ENCODE measurements at regions of chr13 and their contacts with region 1.

Region 1: GRCh38 chr13:26707122-26708006 is 53.2 kb downstream of the GPR12 start:
- DNase-seq: peak; percentile 41 to 68 (median 57)
- H3K4me3 ChIP-seq: no peak overlapping the region
- H3K27ac ChIP-seq: no peak overlapping the region
- H3K4me1 ChIP-seq: no peaks in the 10 kb centered on the region
- H3K27me3 ChIP-seq: no peaks in the 10 kb centered on the region
- CTCF ChIP-seq: peak; percentile 36 to 70 (median 64)
- POLR2A ChIP-seq: no peak

Region 2: DNA sequence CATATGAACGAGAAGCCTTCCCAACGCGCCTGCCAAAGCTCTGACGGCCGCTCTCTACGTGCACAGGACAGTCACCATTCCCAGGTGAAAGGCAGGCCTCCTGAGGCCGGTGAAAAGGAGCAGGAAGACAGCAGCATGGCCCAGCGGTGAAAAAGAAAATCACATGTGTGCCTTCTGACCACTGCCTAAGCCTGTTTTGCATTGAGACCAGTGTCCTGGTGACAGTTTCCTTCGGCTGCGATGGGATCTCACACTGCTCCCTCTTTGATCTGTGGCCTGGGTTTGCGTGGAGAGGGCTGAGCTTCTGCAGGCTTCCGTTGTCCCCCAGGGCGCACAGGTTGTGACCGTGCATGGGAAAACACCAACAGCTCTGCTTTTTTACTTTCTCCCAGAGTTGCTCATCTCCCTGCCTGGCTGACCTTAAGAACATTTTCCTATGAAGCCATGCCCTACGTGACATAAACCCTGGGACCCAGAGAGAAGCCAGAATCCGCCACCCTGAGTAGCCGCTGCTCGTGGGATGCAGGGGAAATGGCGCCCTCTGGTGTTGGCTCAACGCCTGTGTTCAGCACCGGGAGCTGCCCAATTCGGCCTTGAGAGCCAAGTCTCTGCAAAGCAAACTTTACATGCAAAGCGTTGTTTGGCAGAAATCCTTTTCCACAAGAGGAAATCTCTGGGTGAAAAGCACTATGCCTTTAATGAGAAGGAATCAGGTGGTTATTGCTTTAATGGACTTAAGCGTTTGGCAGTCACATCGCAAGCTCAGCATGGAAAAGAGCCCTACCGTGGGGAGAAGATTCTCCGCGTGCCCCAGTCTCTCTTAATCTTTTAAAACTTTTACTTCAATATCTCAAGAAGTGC is 165.4 kb after region 1 on chr13:
- intact Hi-C with region 1: loop called in 1 of 2 experiments (anchors 5 kb)
- DNase-seq: peak; percentile 55 to 82 (median 71)
- H3K4me3 ChIP-seq: no peak overlapping the region
- H3K27ac ChIP-seq: no peak overlapping the region
- H3K4me1 ChIP-seq: no peaks in the 10 kb centered on the region
- H3K27me3 ChIP-seq: no peaks in the 10 kb centered on the region
- CTCF ChIP-seq: peak; percentile 46 to 72 (median 64)
- POLR2A ChIP-seq: no peak

Region 3: DNA sequence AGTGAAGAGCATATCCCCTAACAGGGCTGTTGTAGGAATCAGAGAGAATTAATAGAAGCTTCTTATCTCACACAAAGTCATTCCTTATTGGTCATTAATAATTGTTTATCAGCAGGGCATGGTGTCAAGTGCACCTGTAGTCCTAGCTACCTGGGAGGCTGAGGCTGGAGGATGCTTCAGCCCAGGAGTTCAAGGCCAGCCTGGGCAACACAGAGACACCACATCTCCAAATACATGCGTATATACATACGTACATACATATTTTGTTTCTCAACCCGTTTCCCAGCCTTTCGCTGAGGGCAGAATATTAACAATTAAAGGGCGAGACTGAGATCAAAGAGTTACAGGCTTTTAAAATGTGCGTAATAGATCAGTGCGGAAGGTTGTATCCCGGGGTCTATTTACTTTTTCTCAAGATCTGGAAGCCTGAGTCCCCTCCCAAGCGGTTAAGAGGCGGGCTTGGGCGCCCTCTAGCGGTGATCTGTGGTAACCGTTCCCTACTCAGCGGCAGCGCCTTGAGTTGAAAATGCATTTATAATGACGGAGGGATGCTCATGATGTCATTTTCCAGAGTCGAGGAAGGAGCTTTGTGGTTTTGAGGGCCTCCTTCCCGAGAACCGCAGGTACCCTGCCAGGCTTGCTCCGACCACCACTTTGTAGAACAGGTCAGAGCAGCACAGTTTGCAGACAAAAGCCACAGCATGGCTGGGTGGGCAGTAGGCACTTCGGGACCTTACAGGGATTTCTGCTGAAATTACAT is 222.8 kb after region 1 on chr13:
- intact Hi-C with region 1: loop called (anchors 5 kb)
- DNase-seq: peak; percentile 47 to 79 (median 67)
- H3K4me3 ChIP-seq: no peak overlapping the region
- H3K27ac ChIP-seq: no peak overlapping the region
- H3K4me1 ChIP-seq: peaks cover 0 to 7% of the 10 kb centered on the region in 2 donors
- H3K27me3 ChIP-seq: no peaks in the 10 kb centered on the region
- CTCF ChIP-seq: peak; percentile 66 to 98 (median 83)
- POLR2A ChIP-seq: no peak

Measured in adrenal gland (tissue), 19 donors.